Natural killer cell (primary cell): ENCODE measurements at regions of chr10 and their contacts with region 1.

Region 1: GRCh38 chr10:62816331-62817120 is at the start of gene EGR2:
- DNase-seq: peak; percentile 91 to 97
- ATAC-seq: peak; percentile 75 to 91 (median 81)
- H3K4me3 ChIP-seq: peak within 1 kb of the TSS; percentile 73
- H3K4me3 Mint-ChIP-seq: peak within 1 kb of the TSS; percentile 98
- H3K27ac ChIP-seq: peak within 1 kb of the TSS; percentile 87
- H3K27ac Mint-ChIP-seq: peak within 1 kb of the TSS; percentile 93 to 95
- H3K4me1 ChIP-seq: peaks cover 53% of the 10 kb centered on the region
- H3K4me1 Mint-ChIP-seq: peaks cover 59 to 67% of the 10 kb centered on the region in 2 donors
- H3K27me3 ChIP-seq: peaks cover 22% of the 10 kb centered on the region
- H3K27me3 Mint-ChIP-seq: peaks cover 22 to 31% of the 10 kb centered on the region in 2 donors
- CTCF ChIP-seq: no peak
- total RNA-seq, gene EGR2: 10.0 to 17.2 (median 12.8) TPM

Region 2: DNA sequence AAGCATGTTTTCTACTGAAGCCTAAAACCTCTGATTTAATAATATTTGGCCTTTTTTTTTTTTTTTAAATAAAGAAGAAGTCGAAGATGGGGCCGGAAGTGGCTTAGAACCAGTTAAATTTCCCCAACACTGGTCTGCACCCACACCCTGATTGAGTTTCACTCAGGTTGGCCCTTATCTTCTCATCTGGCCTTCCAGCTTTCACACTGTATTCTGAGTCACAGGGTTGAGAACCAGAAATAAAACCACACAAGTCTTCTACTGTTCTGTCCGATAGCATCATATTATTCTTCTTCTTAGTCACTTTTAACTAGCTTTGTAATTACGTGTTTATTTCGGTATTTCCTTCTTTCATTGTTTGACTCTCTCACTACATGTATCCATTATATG is 432.5 kb before region 1 on chr10:
- intact Hi-C with region 1: loop called (anchors 1 kb)
- DNase-seq: peak; percentile 58 to 83
- ATAC-seq: peak; percentile 94 to 99 (median 96)
- H3K4me3 ChIP-seq: no peak overlapping the region
- H3K4me3 Mint-ChIP-seq: peak overlapping the region; percentile 82
- H3K27ac ChIP-seq: peak overlapping the region; percentile 62
- H3K27ac Mint-ChIP-seq: peak overlapping the region; percentile 75 to 80
- H3K4me1 ChIP-seq: peaks cover 9% of the 10 kb centered on the region
- H3K4me1 Mint-ChIP-seq: peaks cover 61 to 66% of the 10 kb centered on the region in 2 donors
- H3K27me3 ChIP-seq: no peaks in the 10 kb centered on the region
- H3K27me3 Mint-ChIP-seq: peaks cover 2 to 13% of the 10 kb centered on the region in 2 donors
- CTCF ChIP-seq: no peak

Region 3: GRCh38 chr10:62594093-62594520 is 222.4 kb before region 1 on chr10:
- intact Hi-C with region 1: loop called (anchors 1 kb)
- DNase-seq: peak; percentile 35 to 75
- ATAC-seq: peak; percentile 67 to 95 (median 87)
- H3K4me3 ChIP-seq: no peak overlapping the region
- H3K4me3 Mint-ChIP-seq: no peak overlapping the region
- H3K27ac ChIP-seq: no peak overlapping the region
- H3K27ac Mint-ChIP-seq: no peak overlapping the region
- H3K4me1 ChIP-seq: no peaks in the 10 kb centered on the region
- H3K4me1 Mint-ChIP-seq: peaks cover 6% of the 10 kb centered on the region in 2 donors
- H3K27me3 ChIP-seq: no peaks in the 10 kb centered on the region
- H3K27me3 Mint-ChIP-seq: peaks cover 0 to 12% of the 10 kb centered on the region in 2 donors
- CTCF ChIP-seq: peak; percentile 92

Region 4: DNA sequence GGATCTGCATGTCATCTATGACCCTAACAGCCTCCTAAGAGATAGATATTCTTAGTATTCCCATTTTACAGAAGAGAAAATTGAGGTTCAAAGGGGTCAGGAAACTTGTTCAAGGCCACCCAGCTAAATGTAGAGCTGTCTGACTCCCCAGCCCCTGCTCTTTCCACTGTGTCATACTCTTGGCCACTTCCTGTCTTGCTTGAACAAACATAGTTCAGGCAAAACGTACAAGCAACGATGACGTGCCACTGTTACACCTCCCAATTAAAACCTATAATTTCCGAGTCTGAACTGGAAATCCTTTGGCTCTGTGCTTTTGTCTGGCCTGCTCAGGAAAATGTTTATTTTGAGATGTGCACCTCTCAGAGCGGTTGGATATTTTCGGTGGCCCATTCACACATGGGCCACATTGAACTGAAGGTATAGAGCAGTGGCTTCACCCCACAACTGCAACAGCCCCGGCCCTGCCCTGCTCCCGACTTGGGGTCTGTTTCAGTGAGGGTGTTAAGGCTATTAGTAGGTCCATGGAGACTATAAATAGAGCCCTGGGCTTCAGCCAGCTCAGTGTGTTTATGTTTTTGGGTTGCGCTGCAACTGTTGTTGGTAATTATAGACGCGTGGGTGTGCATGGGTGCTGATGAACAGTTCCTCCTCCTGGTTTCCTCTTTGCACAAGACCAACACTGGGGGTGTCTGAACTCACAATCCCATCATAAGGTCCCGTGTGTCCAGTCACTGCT is 184.3 kb before region 1 on chr10:
- intact Hi-C with region 1: loop called (anchors 1 kb)
- DNase-seq: peak; percentile 65 to 80
- ATAC-seq: peak; percentile 77 to 91 (median 83)
- H3K4me3 ChIP-seq: no peak overlapping the region
- H3K4me3 Mint-ChIP-seq: peak overlapping the region; percentile 63
- H3K27ac ChIP-seq: peak overlapping the region; percentile 85
- H3K27ac Mint-ChIP-seq: peak overlapping the region in 1 of 2 donors; percentile 99
- H3K4me1 ChIP-seq: peaks cover 44% of the 10 kb centered on the region
- H3K4me1 Mint-ChIP-seq: peaks cover 19 to 23% of the 10 kb centered on the region in 2 donors
- H3K27me3 ChIP-seq: no peaks in the 10 kb centered on the region
- H3K27me3 Mint-ChIP-seq: no peaks in the 10 kb centered on the region
- CTCF ChIP-seq: no peak

Region 5: DNA sequence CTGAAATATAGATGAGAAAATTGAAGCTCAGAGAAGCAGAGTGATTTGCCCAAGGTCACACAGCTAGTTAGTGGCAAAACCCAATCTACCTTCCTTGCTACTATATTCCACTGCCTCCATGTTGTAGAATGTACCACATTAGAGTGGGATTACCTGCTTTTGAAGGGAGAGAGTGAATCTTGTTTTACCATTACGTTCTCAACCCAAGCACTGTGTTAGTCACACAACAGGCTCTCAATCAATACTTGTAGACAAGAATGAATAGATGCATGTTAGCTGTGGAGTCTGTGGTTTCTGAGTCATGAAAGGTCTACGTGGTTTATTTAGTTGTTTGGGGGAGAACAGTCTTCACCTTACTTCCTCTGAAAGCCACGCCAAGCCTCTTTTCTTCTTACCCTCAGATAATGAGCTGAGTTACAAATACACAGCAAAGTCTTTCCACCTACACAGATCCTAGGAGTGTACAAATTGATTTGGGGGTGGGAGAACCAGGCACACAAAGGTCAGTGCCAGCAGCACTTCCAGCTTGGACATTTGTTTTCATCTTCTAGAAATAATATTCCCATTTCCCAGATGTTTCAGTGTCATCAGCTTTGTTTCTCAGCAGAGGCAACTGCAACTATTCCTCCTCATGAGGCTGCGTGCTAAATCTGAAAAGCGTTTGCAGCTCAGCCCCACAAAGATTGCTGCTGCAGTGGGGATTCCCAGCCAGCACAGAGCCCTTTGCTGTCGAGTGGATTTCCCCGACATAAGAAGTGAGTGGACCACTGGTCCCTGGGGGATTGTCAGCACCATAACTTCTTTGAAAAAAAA is 83.5 kb before region 1 on chr10:
- intact Hi-C with region 1: loop called (anchors 1 kb)
- DNase-seq: peak; percentile 33 to 88
- ATAC-seq: peak; percentile 73 to 80 (median 79)
- H3K4me3 ChIP-seq: no peak overlapping the region
- H3K4me3 Mint-ChIP-seq: peak overlapping the region; percentile 28
- H3K27ac ChIP-seq: peak overlapping the region; percentile 50
- H3K27ac Mint-ChIP-seq: peak overlapping the region in 1 of 2 donors; percentile 78
- H3K4me1 ChIP-seq: peaks cover 33% of the 10 kb centered on the region
- H3K4me1 Mint-ChIP-seq: peaks cover 14% of the 10 kb centered on the region in 2 donors
- H3K27me3 ChIP-seq: no peaks in the 10 kb centered on the region
- H3K27me3 Mint-ChIP-seq: no peaks in the 10 kb centered on the region
- CTCF ChIP-seq: no peak

Region 6: GRCh38 chr10:62804356-62805230 is 11.9 kb before region 1 on chr10 and contains the start of gene ADO:
- intact Hi-C with region 1: loop called (anchors 1 kb)
- DNase-seq: peak; percentile 76 to 89
- ATAC-seq: peak; percentile 85 to 93 (median 87)
- H3K4me3 ChIP-seq: peak within 1 kb of the TSS; percentile 69
- H3K4me3 Mint-ChIP-seq: peak within 1 kb of the TSS; percentile 94
- H3K27ac ChIP-seq: peak within 1 kb of the TSS; percentile 90
- H3K27ac Mint-ChIP-seq: peak within 1 kb of the TSS; percentile 97 to 99
- H3K4me1 ChIP-seq: peaks cover 16% of the 10 kb centered on the region
- H3K4me1 Mint-ChIP-seq: peaks cover 37 to 39% of the 10 kb centered on the region in 2 donors
- H3K27me3 ChIP-seq: no peaks in the 10 kb centered on the region
- H3K27me3 Mint-ChIP-seq: peaks cover 2 to 9% of the 10 kb centered on the region in 2 donors
- CTCF ChIP-seq: no peak
- total RNA-seq, gene ADO: 13.6 to 17.1 (median 15.6) TPM

Region 7: DNA sequence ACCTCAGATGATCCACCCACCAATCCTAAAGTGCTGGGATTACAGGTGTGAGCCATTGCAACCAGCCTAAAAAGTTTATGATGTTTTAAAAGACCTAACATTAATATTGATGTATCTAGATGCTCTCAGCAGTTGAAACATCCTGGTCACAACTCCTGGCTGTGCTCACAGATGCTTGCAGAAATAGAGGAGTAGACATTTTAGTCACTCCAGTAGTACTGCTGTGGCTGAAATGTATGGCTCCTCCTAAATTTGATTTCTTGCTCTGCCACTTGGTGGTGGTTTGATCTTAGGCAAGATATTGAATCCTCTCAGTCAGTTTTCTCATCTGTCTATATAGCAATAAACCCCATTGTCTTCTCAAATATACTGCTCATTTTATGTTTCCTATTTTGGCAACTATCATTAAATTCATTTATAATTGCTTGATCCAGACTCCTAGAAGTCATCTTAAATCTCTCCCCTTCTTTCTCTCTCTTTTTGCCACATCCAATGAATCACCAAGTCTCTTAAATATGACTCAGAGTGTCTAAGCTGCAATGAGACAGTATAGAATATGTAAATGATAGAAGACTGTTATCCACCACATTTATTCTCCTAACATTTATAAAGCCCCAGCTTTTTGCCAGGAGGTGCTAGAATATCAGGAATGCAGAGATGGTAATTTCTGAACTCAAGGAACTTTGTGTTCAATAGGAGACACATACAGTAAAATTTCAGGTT is 238.5 kb after region 1 on chr10:
- intact Hi-C with region 1: no loop called
- DNase-seq: no peak
- ATAC-seq: no peak
- H3K4me3 ChIP-seq: no peak overlapping the region
- H3K4me3 Mint-ChIP-seq: no peak overlapping the region
- H3K27ac ChIP-seq: no peak overlapping the region
- H3K27ac Mint-ChIP-seq: no peak overlapping the region
- H3K4me1 ChIP-seq: no peaks in the 10 kb centered on the region
- H3K4me1 Mint-ChIP-seq: no peaks in the 10 kb centered on the region
- H3K27me3 ChIP-seq: no peaks in the 10 kb centered on the region
- H3K27me3 Mint-ChIP-seq: peaks cover 16 to 20% of the 10 kb centered on the region in 2 donors
- CTCF ChIP-seq: no peak

Region 8: GRCh38 chr10:63133056-63133820 is 316.7 kb after region 1 on chr10 and contains the start of gene NRBF2:
- intact Hi-C with region 1: loop called (anchors 5 kb)
- DNase-seq: peak; percentile 97 to 99
- ATAC-seq: peak; percentile 84 to 96 (median 86)
- H3K4me3 ChIP-seq: peak within 1 kb of the TSS; percentile 93
- H3K4me3 Mint-ChIP-seq: peak within 1 kb of the TSS; percentile 92
- H3K27ac ChIP-seq: peak within 1 kb of the TSS; percentile 98
- H3K27ac Mint-ChIP-seq: peak within 1 kb of the TSS; percentile 92 to 94
- H3K4me1 ChIP-seq: peaks cover 13% of the 10 kb centered on the region
- H3K4me1 Mint-ChIP-seq: peaks cover 30 to 42% of the 10 kb centered on the region in 2 donors
- H3K27me3 ChIP-seq: no peaks in the 10 kb centered on the region
- H3K27me3 Mint-ChIP-seq: peaks cover 8 to 17% of the 10 kb centered on the region in 2 donors
- CTCF ChIP-seq: peak; percentile 16
- total RNA-seq, gene NRBF2: 17.7 to 21.3 (median 18.2) TPM